Mammary epithelial cell (primary cell): ENCODE measurements at regions of chr3 and their contacts with region 1.

Region 1: DNA sequence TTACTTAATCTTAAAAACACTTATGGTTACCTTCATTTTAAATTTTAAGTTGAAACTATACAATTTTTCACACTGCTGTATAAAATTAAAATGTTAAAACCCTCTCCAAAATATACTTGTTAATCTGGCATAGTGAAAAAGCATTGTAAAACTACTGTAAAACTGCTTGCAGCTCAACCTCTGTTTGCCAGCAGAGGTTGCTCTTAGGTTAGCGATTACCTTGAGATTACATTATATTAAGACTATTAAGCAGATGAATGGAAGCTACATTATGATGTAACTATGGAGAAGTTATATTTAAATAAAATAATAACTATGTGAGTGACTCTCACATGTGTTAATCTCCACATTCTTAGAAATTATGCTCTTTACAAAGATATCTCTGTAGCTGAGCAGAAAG is 143.6 kb upstream of the SLITRK3 start:
- DNase-seq: no peak
- H3K4me3 ChIP-seq: no peak overlapping the region
- H3K27ac ChIP-seq: no peak overlapping the region
- H3K4me1 ChIP-seq: no peaks in the 10 kb centered on the region
- H3K27me3 ChIP-seq: no peaks in the 10 kb centered on the region
- CTCF ChIP-seq: peak; percentile 34 to 66

Region 2: DNA sequence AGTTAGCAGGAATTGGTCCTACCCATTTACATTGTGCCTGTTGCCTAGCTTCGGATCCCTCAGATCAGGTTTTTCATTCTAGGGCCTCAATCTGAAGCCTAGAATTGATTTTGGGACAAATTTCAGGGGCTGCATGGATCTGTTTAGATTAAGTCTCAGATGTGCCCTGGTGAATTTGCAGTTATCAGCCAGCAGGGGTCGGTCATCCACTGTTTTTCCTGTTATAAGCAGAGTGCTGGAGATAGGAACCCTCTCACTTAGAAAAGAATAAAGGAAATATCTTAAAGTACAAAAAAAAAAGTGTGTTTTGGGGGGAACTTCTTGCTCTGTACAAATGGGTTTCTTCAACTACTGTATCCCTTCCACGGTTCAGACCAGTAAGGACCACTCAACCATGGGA is 285.0 kb after region 1 on chr3:
- CTCF ChIA-PET with region 1: no interaction called
- dilution Hi-C with region 1: no loop called
- in situ Hi-C with region 1: no loop called
- intact Hi-C with region 1: loop called (anchors 5 kb)
- DNase-seq: no peak
- H3K4me3 ChIP-seq: no peak overlapping the region
- H3K27ac ChIP-seq: no peak overlapping the region
- H3K4me1 ChIP-seq: no peaks in the 10 kb centered on the region
- H3K27me3 ChIP-seq: no peaks in the 10 kb centered on the region
- CTCF ChIP-seq: peak; percentile 60 to 71